Activated CD8-positive, alpha-beta T cell treated with anti-CD3 and anti-CD28 coated beads for 36 hours (primary cell): ENCODE measurements at regions of chr6 and their contacts with region 1.

Region 1: GRCh38 chr6:107964671-107965340 is 6.8 kb upstream of the SEC63 start:
- DNase-seq: peak; percentile 62
- ATAC-seq: peak; percentile 87
- H3K4me3 Mint-ChIP-seq: no peak overlapping the region
- H3K27ac Mint-ChIP-seq: peak overlapping the region; percentile 82
- H3K4me1 Mint-ChIP-seq: peaks cover 16% of the 10 kb centered on the region
- H3K27me3 Mint-ChIP-seq: no peaks in the 10 kb centered on the region
- CTCF ChIP-seq: no peak

Region 2: GRCh38 chr6:107786709-107787588 is 177.9 kb before region 1 on chr6:
- CTCF ChIA-PET with region 1: no interaction called
- POLR2A ChIA-PET with region 1: no interaction called
- intact Hi-C with region 1: no loop called
- DNase-seq: peak; percentile 56
- ATAC-seq: peak; percentile 45
- H3K4me3 Mint-ChIP-seq: peak overlapping the region; percentile 49
- H3K27ac Mint-ChIP-seq: peak overlapping the region; percentile 74
- H3K4me1 Mint-ChIP-seq: peaks cover 84% of the 10 kb centered on the region
- H3K27me3 Mint-ChIP-seq: no peaks in the 10 kb centered on the region
- CTCF ChIP-seq: no peak

Region 3: DNA sequence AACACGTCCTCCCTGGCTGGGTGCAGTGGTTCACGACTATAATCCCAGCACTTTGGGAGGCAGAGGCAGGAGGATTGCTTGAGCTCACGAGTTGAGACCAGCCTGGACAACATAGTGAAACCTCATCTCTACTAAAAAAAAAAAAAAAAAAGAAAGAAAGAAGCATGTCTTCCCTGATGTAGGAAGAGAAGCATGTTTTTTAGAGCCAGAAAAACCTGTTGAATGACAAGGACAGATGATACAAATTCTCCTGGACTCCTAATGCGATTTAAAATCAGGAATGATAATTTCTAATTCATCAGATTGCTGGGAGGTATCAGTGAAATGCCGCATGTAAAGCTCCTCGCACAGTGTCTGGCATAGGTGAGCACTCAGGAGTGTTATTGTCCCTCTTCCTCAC is 16.9 kb after region 1 on chr6:
- CTCF ChIA-PET with region 1: interaction called, 16 read pairs
- POLR2A ChIA-PET with region 1: no interaction called
- intact Hi-C with region 1: no loop called
- DNase-seq: no peak
- ATAC-seq: no peak
- H3K4me3 Mint-ChIP-seq: no peak overlapping the region
- H3K27ac Mint-ChIP-seq: no peak overlapping the region
- H3K4me1 Mint-ChIP-seq: no peaks in the 10 kb centered on the region
- H3K27me3 Mint-ChIP-seq: no peaks in the 10 kb centered on the region
- CTCF ChIP-seq: no peak